Heart right ventricle (tissue), 16 donors: ENCODE measurements at regions of chr9 and their contacts with region 1.

Region 1: GRCh38 chr9:101716629-101717028 is 21.8 kb downstream of the GRIN3A start:
- DNase-seq: peak in 1 of 2 donors; percentile 36
- ATAC-seq: peak in 7 of 8 donors; percentile 55 to 81 (median 61)
- H3K4me3 ChIP-seq: no peak overlapping the region
- H3K27ac ChIP-seq: no peak overlapping the region
- H3K4me1 ChIP-seq: peaks cover 0 to 8% (median 0%) of the 10 kb centered on the region in 9 donors
- H3K27me3 ChIP-seq: peaks cover 0 to 9% (median 0%) of the 10 kb centered on the region in 7 donors
- CTCF ChIP-seq: no peak

Region 2: DNA sequence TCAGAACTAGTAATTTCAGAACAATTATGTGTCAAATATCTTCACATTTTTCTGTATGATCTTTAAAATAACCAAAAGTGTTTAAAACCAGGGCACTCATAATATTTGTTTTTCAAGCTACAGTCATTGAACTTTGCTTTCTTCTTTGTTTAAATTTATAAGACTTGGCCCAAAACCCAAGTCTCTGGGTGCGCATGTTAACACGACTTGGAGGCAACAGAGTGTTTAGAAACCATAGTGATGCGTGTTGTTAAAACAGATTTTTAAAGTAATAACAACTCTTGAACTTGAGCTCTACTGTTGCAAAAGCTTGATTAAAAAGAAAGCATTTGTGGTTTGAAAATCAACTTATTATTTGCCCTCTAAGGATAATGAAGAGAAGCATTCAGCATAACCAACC is 47.8 kb after region 1 on chr9:
- intact Hi-C with region 1: loop called in 1 of 10 experiments (anchors 1 kb)
- DNase-seq: no peak
- ATAC-seq: no peak
- H3K4me3 ChIP-seq: no peak overlapping the region
- H3K27ac ChIP-seq: no peak overlapping the region
- H3K4me1 ChIP-seq: no peaks in the 10 kb centered on the region
- H3K27me3 ChIP-seq: no peaks in the 10 kb centered on the region
- CTCF ChIP-seq: no peak